ENCODE measurements at regions of chr12 and their contacts with region 1.

Region 1: GRCh38 chr12:49623142-49623904 is at the start of gene PRPF40B:
- DNase-seq: peak; percentile 89
- ATAC-seq: peak; percentile 79
- H3K4me3 Mint-ChIP-seq: peak within 1 kb of the TSS; percentile 88
- H3K27ac Mint-ChIP-seq: peak within 1 kb of the TSS; percentile 86
- H3K4me1 Mint-ChIP-seq: peaks cover 25% of the 10 kb centered on the region
- H3K27me3 Mint-ChIP-seq: no peaks in the 10 kb centered on the region
- CTCF ChIP-seq: no peak
- total RNA-seq, gene PRPF40B: 16.4 and 23.4 TPM in 2 replicates

Region 2: GRCh38 chr12:49018261-49019119 is 604.8 kb before region 1 on chr12 and contains the start of gene PRKAG1:
- CTCF ChIA-PET with region 1: no interaction called
- POLR2A ChIA-PET with region 1: no interaction called
- intact Hi-C with region 1: no loop called
- DNase-seq: peak; percentile 97
- ATAC-seq: peak; percentile 86
- H3K4me3 Mint-ChIP-seq: peak within 1 kb of the TSS; percentile 93
- H3K27ac Mint-ChIP-seq: peak within 1 kb of the TSS; percentile 98
- H3K4me1 Mint-ChIP-seq: peaks cover 31% of the 10 kb centered on the region
- H3K27me3 Mint-ChIP-seq: no peaks in the 10 kb centered on the region
- CTCF ChIP-seq: no peak
- total RNA-seq, gene PRKAG1: 55.3 and 70.5 TPM in 2 replicates

Region 3: GRCh38 chr12:49322708-49323523 is 300.4 kb before region 1 on chr12 and contains the start of gene TROAP:
- CTCF ChIA-PET with region 1: no interaction called
- POLR2A ChIA-PET with region 1: interaction called, 5 read pairs
- intact Hi-C with region 1: loop called (anchors 1 kb)
- DNase-seq: peak; percentile 85
- ATAC-seq: peak; percentile 99
- H3K4me3 Mint-ChIP-seq: peak within 1 kb of the TSS; percentile 94
- H3K27ac Mint-ChIP-seq: peak within 1 kb of the TSS; percentile 73
- H3K4me1 Mint-ChIP-seq: peaks cover 18% of the 10 kb centered on the region
- H3K27me3 Mint-ChIP-seq: no peaks in the 10 kb centered on the region
- CTCF ChIP-seq: no peak
- total RNA-seq, gene TROAP: 2.0 and 3.1 TPM in 2 replicates

Region 4: DNA sequence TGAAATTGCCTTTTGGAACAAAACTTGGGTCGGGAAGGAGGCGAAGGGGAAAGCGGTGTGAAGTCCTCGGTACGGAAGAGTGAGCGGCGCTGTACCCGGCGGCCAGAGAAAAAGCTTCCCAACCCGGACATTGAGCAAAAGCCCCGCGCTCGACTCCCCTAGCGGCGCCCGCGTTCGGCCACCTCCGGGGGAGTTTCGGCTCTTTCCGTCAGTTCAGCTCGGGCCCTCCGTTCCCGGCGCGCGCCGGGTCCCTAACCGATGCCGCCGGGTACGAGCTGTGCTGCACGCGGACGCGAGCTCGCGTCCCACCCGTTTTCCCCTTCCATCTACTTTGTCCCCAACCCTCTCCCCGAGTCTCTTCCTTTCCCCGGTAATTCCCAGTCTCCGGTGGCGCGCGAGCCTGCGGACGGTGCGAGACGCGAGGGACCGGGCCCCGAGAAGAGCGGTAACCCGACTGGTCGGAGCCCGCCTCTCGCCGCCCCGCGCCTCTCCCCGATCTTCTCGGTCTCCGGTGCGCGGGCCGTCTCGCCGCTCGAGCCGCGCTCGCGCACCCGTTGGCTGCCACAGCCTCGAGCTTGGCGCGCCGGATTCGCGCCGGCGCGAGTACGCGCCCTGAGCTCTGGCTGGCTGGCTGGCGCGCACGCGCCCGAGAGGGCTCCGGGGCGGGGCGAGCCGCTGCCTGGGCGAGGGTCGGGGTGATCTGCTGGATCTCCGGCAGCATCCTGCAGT is 256.5 kb before region 1 on chr12:
- CTCF ChIA-PET with region 1: no interaction called
- POLR2A ChIA-PET with region 1: interaction called, 4 read pairs
- intact Hi-C with region 1: loop called (anchors 2 kb)
- DNase-seq: peak; percentile 87
- ATAC-seq: peak; percentile 80
- H3K4me3 Mint-ChIP-seq: peak overlapping the region; percentile 99
- H3K27ac Mint-ChIP-seq: peak overlapping the region; percentile 98
- H3K4me1 Mint-ChIP-seq: peaks cover 51% of the 10 kb centered on the region
- H3K27me3 Mint-ChIP-seq: no peaks in the 10 kb centered on the region
- CTCF ChIP-seq: no peak

Region 5: GRCh38 chr12:49567611-49568441 is 55.5 kb before region 1 on chr12 and contains the start of gene MCRS1:
- CTCF ChIA-PET with region 1: no interaction called
- POLR2A ChIA-PET with region 1: interaction called, 9 read pairs
- intact Hi-C with region 1: loop called (anchors 1 kb)
- DNase-seq: peak; percentile 80
- ATAC-seq: peak; percentile 88
- H3K4me3 Mint-ChIP-seq: peak within 1 kb of the TSS; percentile 97
- H3K27ac Mint-ChIP-seq: peak within 1 kb of the TSS; percentile 100
- H3K4me1 Mint-ChIP-seq: peaks cover 30% of the 10 kb centered on the region
- H3K27me3 Mint-ChIP-seq: no peaks in the 10 kb centered on the region
- CTCF ChIP-seq: no peak
- total RNA-seq, gene MCRS1: 82.2 and 84.2 TPM in 2 replicates

Region 6: GRCh38 chr12:49636979-49637755 is 13.8 kb after region 1 on chr12:
- CTCF ChIA-PET with region 1: interaction called, 6 read pairs
- POLR2A ChIA-PET with region 1: interaction called, 12 read pairs
- intact Hi-C with region 1: no loop called
- DNase-seq: peak; percentile 22
- ATAC-seq: peak; percentile 94
- H3K4me3 Mint-ChIP-seq: no peak overlapping the region
- H3K27ac Mint-ChIP-seq: peak overlapping the region; percentile 22
- H3K4me1 Mint-ChIP-seq: peaks cover 27% of the 10 kb centered on the region
- H3K27me3 Mint-ChIP-seq: no peaks in the 10 kb centered on the region
- CTCF ChIP-seq: no peak

Region 7: GRCh38 chr12:49707128-49707811 is 83.9 kb after region 1 on chr12 and contains the start of gene FMNL3:
- CTCF ChIA-PET with region 1: interaction called, 3 read pairs
- POLR2A ChIA-PET with region 1: interaction called, 13 read pairs
- intact Hi-C with region 1: loop called (anchors 1 kb)
- DNase-seq: peak; percentile 99
- ATAC-seq: peak; percentile 90
- H3K4me3 Mint-ChIP-seq: peak within 1 kb of the TSS; percentile 97
- H3K27ac Mint-ChIP-seq: peak within 1 kb of the TSS; percentile 91
- H3K4me1 Mint-ChIP-seq: peaks cover 45% of the 10 kb centered on the region
- H3K27me3 Mint-ChIP-seq: peaks cover 5% of the 10 kb centered on the region
- CTCF ChIP-seq: no peak
- total RNA-seq, gene FMNL3: 74.7 and 84.3 TPM in 2 replicates